Activated naive CD4-positive, alpha-beta T cell treated with anti-CD3 and anti-CD28 coated beads, Interleukin-2, amount 10 ng/mL, durations not matched to agents 7 days and 5 days (primary cell): ENCODE measurements at regions of chr11 and their contacts with region 1.

Region 1: DNA sequence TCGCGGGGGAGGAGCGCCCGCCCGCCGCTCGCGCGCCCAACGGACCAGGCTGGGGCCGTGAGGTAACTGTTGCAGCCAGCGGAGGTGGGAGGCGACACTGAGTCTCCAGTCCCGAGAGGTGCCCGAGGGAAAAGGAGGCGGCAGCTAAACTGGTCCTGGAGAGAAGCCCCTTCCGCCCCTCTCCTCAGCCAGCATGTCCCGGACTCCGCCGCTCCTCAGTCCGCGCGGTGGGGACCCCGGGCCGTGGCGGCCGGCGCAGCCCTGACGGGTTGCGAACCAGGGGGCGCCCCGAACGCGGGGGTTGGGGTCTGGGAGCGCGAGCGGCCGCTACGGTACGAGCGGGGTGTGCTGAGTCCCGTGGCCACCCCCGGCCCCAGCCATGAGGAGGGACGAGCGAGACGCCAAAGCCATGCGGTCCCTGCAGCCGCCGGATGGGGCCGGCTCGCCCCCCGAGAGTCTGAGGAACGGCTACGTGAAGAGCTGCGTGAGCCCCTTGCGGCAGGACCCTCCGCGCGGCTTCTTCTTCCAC is at the start of gene PDE3B:
- DNase-seq: peak; percentile 88
- H3K4me3 Mint-ChIP-seq: peak within 1 kb of the TSS; percentile 76
- H3K27ac Mint-ChIP-seq: peak within 1 kb of the TSS; percentile 89
- H3K4me1 Mint-ChIP-seq: peaks cover 45% of the 10 kb centered on the region
- H3K27me3 Mint-ChIP-seq: no peaks in the 10 kb centered on the region

Region 2: DNA sequence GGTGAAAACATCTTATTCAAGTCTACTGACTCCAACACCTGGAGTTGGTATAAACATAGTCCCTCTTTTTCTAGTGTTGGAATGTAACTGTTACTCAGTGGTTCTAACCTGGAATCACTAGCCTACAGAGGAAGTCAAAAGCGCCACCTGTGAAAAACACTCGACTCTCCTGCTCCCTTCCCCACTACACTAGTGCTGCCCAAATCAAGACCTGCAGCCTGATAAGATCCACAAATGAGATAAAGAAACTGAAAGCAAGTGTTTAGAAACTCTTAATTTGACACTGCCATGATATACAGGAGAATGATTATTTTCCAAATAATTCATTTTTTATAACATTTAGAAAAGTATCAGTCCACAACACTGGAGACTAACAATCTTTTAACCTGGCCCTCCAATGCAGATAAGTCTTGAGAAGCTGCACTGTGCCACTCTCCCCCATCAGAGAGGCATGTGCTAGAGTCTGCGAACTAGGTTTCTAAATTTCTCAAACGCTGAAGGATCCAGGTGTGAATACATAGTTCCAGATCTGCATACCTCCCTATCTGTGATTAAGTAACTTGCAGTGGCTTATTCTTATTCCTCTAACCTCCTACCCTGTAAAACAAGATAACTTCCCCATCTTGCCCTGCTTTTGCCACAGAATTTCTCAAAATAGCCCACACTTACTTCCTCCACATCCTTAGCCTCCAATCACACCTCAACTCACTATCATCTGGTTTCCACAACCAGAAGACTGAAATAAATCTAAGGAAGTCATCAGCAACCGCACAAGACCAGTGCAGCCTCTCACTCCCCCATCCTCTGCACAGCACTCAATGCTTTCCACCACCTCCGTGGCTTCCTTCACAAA is 372.8 kb before region 1 on chr11:
- CTCF ChIA-PET with region 1: no interaction called
- DNase-seq: peak; percentile 62
- H3K4me3 Mint-ChIP-seq: peak overlapping the region; percentile 53
- H3K27ac Mint-ChIP-seq: peak overlapping the region; percentile 88
- H3K4me1 Mint-ChIP-seq: peaks cover 33% of the 10 kb centered on the region
- H3K27me3 Mint-ChIP-seq: no peaks in the 10 kb centered on the region

Region 3: DNA sequence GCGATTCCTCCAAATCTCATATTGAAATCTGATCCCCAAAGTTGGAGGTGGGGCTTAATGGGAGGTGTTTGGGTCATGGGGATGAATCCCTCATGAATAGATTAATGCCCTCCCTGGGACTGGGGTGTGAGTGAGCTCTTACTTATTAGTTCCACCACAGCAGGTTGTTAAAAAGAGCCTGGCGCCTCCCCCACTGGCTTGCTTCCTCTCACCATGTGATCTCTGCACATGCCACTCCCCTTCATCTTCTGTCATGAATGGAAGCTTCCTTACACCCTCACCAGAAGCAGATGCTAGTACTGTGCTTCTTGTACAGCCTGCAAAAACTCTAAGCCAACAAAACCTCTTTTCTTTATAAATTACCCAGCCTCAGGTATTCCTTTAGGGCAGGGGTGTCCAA is 293.5 kb before region 1 on chr11:
- CTCF ChIA-PET with region 1: no interaction called
- DNase-seq: no peak
- H3K4me3 Mint-ChIP-seq: no peak overlapping the region
- H3K27ac Mint-ChIP-seq: no peak overlapping the region
- H3K4me1 Mint-ChIP-seq: peaks cover 41% of the 10 kb centered on the region
- H3K27me3 Mint-ChIP-seq: no peaks in the 10 kb centered on the region

Region 4: GRCh38 chr11:14544611-14545010 is 99.2 kb before region 1 on chr11:
- CTCF ChIA-PET with region 1: interaction called, 15 read pairs
- DNase-seq: no peak
- H3K4me3 Mint-ChIP-seq: no peak overlapping the region
- H3K27ac Mint-ChIP-seq: peak overlapping the region; percentile 76
- H3K4me1 Mint-ChIP-seq: peaks cover 54% of the 10 kb centered on the region
- H3K27me3 Mint-ChIP-seq: no peaks in the 10 kb centered on the region

Region 5: GRCh38 chr11:14578541-14578956 is 65.2 kb before region 1 on chr11:
- CTCF ChIA-PET with region 1: interaction called, 10 read pairs
- DNase-seq: peak; percentile 76
- H3K4me3 Mint-ChIP-seq: peak overlapping the region; percentile 46
- H3K27ac Mint-ChIP-seq: peak overlapping the region; percentile 99
- H3K4me1 Mint-ChIP-seq: peaks cover 60% of the 10 kb centered on the region
- H3K27me3 Mint-ChIP-seq: no peaks in the 10 kb centered on the region

Region 6: GRCh38 chr11:14764579-14765527 is 121.1 kb after region 1 on chr11:
- CTCF ChIA-PET with region 1: interaction called, 14 read pairs
- DNase-seq: peak; percentile 59
- H3K4me3 Mint-ChIP-seq: no peak overlapping the region
- H3K27ac Mint-ChIP-seq: no peak overlapping the region
- H3K4me1 Mint-ChIP-seq: peaks cover 45% of the 10 kb centered on the region
- H3K27me3 Mint-ChIP-seq: no peaks in the 10 kb centered on the region